ENCODE measurements at regions of chr19 and their contacts with region 1.

Region 1: GRCh38 chr19:17305517-17306284 is at the start of gene MRPL34:
- DNase-seq: peak; percentile 100
- H3K4me3 ChIP-seq: peak within 1 kb of the TSS; percentile 57 to 90 (median 80)
- H3K27ac ChIP-seq: peak within 1 kb of the TSS; percentile 56
- H3K4me1 ChIP-seq: peaks cover 43% of the 10 kb centered on the region
- H3K27me3 ChIP-seq: no peaks in the 10 kb centered on the region
- CTCF ChIP-seq: peak; percentile 61 to 91
- total RNA-seq, gene MRPL34: 36.7 to 76.3 TPM

Region 2: DNA sequence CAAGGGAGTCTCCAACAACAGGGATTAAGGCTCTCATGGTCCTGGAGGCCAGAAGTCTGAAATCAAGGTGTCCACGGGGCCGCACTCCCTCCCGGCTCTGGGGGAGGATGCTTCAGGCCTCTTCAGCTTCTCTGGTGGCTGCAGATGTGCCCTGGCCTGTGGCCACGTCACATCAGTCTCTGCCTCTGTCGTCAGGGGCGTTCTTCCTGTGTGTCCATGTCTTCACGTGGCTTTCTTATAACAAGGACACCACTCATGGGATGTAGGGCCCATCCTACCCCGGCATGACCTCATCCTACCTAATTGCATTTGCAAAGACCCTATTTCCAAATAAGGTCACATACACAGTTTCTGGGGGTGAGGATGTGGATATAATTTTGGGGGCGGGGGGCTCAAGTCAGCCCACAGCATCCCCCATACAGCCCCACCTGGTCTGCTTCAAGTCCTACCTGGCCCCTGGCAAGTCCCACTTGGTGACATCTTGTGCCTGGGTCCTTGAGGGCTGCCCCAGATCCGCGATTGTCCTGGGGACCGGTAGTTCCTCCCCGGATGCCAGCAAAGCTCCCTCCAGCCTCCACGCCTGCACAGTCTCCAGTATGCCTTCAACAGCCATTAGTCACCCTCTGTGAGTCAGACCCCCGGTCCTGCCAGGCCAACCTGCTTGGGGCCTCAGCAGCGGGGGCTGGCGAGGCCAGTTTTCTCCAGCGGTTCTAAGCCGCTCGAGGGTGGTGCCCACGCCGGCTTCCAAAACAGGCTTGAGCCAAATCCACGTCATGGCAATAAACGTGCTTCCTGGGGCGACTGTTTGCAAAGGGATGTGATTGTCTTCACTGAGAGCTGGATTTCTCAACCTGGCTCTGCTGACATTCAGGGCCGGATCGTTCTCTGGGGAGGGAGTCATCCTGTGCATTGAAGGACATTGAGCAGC is 197.9 kb before region 1 on chr19:
- CTCF ChIA-PET with region 1: no interaction called
- dilution Hi-C with region 1: loop called (anchors 10 kb)
- in situ Hi-C with region 1: no loop called
- intact Hi-C with region 1: no loop called
- DNase-seq: peak; percentile 98
- H3K4me3 ChIP-seq: no peak overlapping the region
- H3K27ac ChIP-seq: peak overlapping the region; percentile 76
- H3K4me1 ChIP-seq: peaks cover 24% of the 10 kb centered on the region
- H3K27me3 ChIP-seq: no peaks in the 10 kb centered on the region
- CTCF ChIP-seq: no peak

Region 3: DNA sequence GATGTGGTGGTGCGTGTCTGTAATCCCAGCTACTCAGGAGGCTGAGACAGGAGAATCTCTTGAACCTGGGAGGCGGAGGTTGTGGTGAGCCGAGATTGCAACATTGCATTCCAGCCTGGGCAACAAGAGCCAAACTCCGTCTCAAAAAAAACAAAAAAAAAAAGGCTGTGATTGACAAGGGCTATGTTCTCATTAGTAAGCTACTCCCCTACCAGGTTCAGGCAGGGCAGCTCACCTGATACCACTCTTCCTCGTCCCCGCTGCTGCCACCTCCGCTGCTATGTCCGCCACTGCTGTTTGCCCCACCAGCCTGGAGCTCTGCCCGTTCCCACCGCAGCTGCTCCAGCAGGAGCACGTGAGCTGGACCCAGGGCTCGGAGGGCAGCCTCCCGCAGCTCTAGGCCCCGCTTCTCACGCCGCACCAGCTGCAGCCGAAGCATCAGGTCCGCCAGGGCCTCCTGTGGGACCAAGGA is 50.5 kb before region 1 on chr19:
- CTCF ChIA-PET with region 1: no interaction called
- dilution Hi-C with region 1: no loop called
- in situ Hi-C with region 1: no loop called
- intact Hi-C with region 1: no loop called
- DNase-seq: no peak
- H3K4me3 ChIP-seq: no peak overlapping the region
- H3K27ac ChIP-seq: no peak overlapping the region
- H3K4me1 ChIP-seq: no peaks in the 10 kb centered on the region
- H3K27me3 ChIP-seq: no peaks in the 10 kb centered on the region
- CTCF ChIP-seq: no peak

Region 4: DNA sequence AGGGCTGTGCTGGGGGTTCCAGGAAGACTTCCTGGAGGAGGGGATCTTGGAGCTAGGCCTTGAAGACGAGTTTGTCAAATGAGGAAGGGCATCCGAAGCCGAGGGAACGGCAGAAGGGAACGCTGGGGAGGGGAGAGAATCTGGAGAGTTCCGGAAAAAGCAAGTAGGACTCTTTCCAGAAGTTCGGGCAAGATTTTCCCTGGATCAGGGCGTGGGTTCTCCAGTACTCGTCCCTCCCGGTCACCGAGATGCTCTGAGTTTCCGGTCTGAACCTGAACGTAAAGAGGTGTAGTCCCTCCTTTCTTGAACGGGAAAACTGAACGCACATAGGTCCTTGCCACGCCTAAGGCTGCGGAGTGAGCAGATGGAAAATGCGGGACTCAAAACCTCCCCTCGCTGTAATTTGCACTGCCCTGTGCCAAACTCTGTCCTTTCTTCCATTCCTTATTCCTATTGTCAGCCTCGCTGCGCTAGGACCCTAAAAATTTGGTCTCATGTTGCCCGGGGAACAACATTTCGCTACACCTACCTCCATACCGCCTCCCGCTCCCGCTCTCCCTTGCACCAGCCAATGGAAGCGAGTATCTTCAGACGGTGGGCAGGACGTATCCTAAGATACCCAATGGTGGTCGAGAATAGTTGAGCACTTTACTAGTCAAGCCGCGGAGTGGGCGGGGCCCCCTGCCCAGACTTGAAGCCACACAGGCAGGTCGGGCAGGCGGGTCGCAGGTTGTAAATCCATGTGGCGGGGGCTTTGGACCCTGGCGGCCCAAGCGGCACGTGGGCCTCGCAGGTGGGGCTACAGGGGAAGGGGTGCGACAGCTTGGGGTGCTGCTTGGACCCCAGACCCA is 31.4 kb after region 1 on chr19 and contains the start of gene GTPBP3:
- CTCF ChIA-PET with region 1: interaction called, 4 read pairs
- dilution Hi-C with region 1: no loop called
- in situ Hi-C with region 1: no loop called
- intact Hi-C with region 1: loop called (anchors 1 kb)
- DNase-seq: peak; percentile 99
- H3K4me3 ChIP-seq: peak within 1 kb of the TSS; percentile 69 to 87 (median 73)
- H3K27ac ChIP-seq: peak within 1 kb of the TSS; percentile 69
- H3K4me1 ChIP-seq: peaks cover 27% of the 10 kb centered on the region
- H3K27me3 ChIP-seq: no peaks in the 10 kb centered on the region
- CTCF ChIP-seq: no peak
- total RNA-seq, gene GTPBP3: 17.5 to 35.3 TPM